Activated naive CD8-positive, alpha-beta T cell treated with anti-CD3 and anti-CD28 coated beads, Interleukin-2, amount 10 ng/mL, durations not matched to agents 7 days and 5 days (primary cell): ENCODE measurements at regions of chr2 and their contacts with region 1.

Region 1: GRCh38 chr2:128154225-128154624 is 63.2 kb downstream of the UGGT1 start:
- DNase-seq: no peak
- ATAC-seq: no peak
- H3K4me3 Mint-ChIP-seq: no peak overlapping the region
- H3K27ac Mint-ChIP-seq: no peak overlapping the region
- H3K4me1 Mint-ChIP-seq: peaks cover 1% of the 10 kb centered on the region
- H3K27me3 Mint-ChIP-seq: no peaks in the 10 kb centered on the region

Region 2: DNA sequence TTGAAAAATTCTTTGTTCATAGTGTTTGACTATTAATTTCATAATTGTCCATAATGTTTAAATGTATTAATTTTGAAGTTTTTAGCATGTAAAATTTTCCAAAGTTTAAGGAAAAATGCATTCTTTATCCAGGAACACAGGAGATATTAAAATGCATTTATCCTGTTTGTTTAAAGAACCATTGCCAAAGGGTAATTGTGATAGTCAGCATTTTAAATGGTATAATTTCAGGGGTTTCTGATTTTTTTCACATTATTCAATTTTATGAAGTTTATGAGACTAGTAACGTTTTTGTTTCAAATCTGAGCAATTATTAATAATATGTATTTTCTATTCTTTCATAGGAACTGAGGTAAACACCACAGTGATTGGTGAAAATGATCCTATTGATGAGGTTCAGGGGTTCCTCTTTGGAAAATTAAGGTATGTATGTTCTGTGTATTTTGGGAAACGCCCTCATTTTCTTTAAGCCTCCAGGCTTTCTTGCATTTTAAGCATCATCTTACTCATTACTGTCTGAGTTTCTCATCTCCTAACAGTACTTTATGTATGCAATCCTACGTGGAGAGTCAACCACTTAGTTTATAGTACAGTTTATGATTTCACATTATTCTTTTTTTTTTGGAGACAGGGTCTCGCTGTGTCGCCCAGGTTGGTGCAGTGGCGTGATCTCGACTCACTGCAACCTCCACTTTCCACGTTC is 38.2 kb before region 1 on chr2:
- POLR2A ChIA-PET with region 1: no interaction called
- DNase-seq: no peak
- ATAC-seq: no peak
- H3K4me3 Mint-ChIP-seq: no peak overlapping the region
- H3K27ac Mint-ChIP-seq: no peak overlapping the region
- H3K4me1 Mint-ChIP-seq: no peaks in the 10 kb centered on the region
- H3K27me3 Mint-ChIP-seq: no peaks in the 10 kb centered on the region

Region 3: DNA sequence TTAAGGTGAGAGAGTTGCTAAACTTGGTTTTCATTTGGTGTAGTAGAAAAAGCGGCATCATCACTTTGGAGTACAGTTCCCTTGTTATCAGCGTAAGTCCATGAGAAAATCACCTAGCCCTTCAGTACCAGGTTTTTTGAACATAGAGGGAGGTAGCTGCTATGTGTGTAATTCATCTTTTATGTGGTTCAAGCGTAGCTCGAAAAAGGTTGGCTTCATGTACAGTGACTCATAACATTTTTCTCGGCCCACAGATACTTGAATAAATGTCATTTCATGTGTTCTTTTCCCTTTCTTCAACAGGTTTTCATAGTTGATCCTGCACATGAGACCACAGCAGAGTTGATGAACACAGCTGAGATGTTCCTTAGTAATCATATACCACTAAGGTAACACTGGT is 19.7 kb before region 1 on chr2:
- POLR2A ChIA-PET with region 1: interaction called, 10 read pairs
- DNase-seq: no peak
- ATAC-seq: no peak
- H3K4me3 Mint-ChIP-seq: no peak overlapping the region
- H3K27ac Mint-ChIP-seq: no peak overlapping the region
- H3K4me1 Mint-ChIP-seq: no peaks in the 10 kb centered on the region
- H3K27me3 Mint-ChIP-seq: no peaks in the 10 kb centered on the region

Region 4: DNA sequence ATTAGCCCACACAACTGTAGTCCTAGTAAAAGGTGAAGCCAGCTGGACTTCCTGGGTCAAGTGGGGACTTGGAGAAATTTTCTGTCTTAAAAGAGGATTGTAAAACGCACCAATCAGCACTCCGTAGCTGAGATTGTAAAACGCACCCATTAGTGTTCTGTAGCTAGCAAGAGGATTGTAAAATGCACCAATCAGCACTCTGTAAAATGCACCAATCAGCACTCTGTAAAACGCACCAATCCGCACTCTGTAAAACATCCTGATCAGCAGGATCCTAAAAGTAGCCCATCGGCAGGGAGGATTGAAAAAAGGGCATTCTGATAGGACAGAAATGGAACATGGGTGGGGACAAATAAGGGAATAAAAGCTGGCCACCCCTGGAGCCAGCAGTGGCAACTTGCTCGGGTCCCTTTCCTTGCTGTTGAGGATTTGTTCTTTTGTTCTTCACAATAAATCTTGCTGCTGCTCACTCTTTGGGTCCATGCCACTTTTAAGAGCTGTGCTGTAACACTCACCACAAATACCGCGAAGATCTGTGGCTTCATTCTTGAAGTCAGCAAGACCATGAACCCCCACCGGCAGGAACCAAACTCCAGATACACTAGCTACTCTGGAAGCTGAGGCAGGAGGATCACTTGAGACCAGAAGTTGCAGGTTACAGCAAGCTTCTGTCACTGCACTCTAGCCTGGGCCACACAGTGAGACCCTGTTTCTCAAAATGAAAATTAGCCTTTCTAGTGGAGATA is 61.8 kb after region 1 on chr2:
- POLR2A ChIA-PET with region 1: no interaction called
- DNase-seq: no peak
- ATAC-seq: no peak
- H3K4me3 Mint-ChIP-seq: no peak overlapping the region
- H3K27ac Mint-ChIP-seq: no peak overlapping the region
- H3K4me1 Mint-ChIP-seq: peaks cover 8% of the 10 kb centered on the region
- H3K27me3 Mint-ChIP-seq: peaks cover 4% of the 10 kb centered on the region